ENCODE measurements at regions of chr7 and their contacts with region 1.

Region 1: DNA sequence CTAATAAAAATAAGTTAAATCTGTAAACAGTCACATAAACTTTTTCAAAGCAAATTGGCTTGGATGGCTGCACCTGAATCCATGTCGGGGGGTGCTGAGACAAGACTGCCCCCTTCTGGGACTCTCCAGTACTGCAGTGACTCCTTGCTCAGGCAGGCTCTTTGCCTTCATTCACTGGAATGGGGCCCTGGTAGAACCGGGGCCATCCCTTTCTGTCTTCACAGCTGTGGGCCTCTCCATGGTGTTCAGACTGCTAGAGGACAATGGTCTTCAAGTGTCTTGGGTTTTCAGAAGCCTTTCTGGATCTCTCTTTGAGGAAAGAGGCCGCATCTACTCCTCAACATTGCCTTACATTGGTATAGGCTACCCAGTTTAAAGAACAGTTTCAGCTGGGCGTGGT is 16.1 kb upstream of the IMPDH1 start:
- DNase-seq: peak; percentile 75
- H3K4me3 Mint-ChIP-seq: no peak overlapping the region
- H3K27ac Mint-ChIP-seq: no peak overlapping the region
- H3K4me1 Mint-ChIP-seq: peaks cover 11% of the 10 kb centered on the region
- H3K27me3 Mint-ChIP-seq: no peaks in the 10 kb centered on the region
- CTCF ChIP-seq: peak; percentile 95

Region 2: DNA sequence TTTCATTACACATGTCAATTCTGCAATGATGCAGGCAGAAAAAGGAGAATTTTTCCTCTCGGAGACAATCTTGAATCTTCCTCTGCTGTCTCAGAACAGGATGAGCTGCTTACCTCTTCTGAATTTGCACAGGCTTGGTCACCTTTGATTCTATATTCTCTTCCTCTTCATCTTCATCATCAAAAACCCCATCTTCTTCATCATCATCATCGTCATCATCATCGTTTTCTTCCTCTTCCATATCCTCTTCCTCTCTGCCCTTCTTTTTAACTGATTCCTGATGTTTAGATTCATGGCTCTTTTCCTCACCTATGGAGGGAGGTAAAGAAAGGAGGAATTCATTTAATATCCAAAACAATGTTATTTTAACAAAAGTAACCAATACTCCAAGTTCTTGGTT is 90.1 kb before region 1 on chr7:
- CTCF ChIA-PET with region 1: no interaction called
- POLR2A ChIA-PET with region 1: no interaction called
- intact Hi-C with region 1: no loop called
- DNase-seq: no peak
- H3K4me3 Mint-ChIP-seq: no peak overlapping the region
- H3K27ac Mint-ChIP-seq: no peak overlapping the region
- H3K4me1 Mint-ChIP-seq: no peaks in the 10 kb centered on the region
- H3K27me3 Mint-ChIP-seq: no peaks in the 10 kb centered on the region
- CTCF ChIP-seq: no peak

Region 3: DNA sequence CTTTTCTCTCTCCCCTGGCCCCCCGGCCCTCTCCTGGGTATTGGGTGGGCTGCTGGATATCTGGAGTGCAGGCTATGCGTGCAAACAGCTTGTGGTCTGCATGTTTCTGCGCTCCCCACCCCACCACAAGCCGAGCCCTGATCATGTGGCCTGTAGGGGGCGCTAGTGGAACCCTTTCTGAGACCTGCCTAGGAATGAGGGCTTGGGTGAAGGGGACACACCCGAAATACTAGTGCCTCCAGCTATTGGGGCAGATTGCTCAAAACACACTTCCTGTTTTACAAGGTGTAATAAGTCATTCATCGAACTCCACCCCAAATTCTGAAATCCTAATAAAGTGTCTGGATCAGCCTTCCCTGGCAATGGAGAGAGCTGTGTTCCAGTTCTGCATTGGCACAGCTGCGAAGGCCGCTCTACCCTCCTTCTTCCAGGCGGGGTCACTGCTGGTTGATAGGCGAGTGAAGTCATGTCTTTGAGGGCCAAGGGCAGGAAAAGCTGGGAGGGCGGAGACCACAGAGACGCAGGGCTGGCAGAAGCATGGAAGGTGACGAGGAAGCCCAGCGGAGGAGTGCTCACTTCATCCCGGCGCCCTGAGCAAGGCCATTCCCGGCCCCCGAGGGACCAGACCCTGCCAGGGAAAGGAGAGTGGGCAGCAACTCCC is 44.6 kb before region 1 on chr7:
- CTCF ChIA-PET with region 1: interaction called, 11 read pairs
- POLR2A ChIA-PET with region 1: no interaction called
- intact Hi-C with region 1: no loop called
- DNase-seq: peak; percentile 81
- H3K4me3 Mint-ChIP-seq: no peak overlapping the region
- H3K27ac Mint-ChIP-seq: no peak overlapping the region
- H3K4me1 Mint-ChIP-seq: peaks cover 11% of the 10 kb centered on the region
- H3K27me3 Mint-ChIP-seq: no peaks in the 10 kb centered on the region
- CTCF ChIP-seq: peak; percentile 75

Region 4: DNA sequence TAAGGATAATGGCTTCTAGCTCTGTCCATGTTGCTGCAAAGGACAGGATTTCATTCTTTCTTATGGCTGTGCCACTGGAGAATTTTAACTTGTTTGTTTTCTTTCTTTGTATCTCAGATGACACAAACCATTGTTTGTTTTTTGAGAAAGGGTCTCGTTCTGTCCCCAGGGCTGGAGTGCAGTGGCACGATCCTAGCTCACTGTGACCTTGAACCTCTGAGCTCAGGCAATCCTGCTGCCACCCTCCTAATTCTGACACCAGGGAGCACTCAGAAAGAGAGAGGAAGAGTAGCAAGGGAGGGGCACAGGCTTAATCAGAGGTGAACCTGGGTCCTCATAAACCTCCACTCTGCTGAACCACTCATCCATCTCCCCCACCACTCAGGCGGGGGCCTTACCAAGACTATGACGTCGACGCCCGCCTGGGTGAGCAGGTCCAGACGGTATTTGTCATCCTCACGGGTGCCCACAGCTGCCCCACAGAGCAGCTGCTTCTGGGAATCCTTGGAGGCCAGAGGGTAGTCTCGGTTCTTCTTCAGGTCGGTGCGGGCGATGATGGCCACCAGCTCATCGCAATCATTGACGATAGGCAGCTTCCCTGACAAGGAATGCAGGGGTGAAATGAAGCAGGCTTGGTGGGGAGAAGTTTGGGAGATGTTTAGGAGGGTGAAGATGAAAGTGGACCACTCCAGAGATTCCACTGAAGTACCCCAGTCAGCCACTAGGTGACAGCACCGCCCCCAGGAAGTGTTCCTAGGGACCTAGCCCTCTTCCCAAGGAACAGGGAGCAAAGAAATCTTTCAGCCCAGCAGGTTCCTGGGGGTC is 27.6 kb before region 1 on chr7:
- CTCF ChIA-PET with region 1: interaction called, 160 read pairs
- POLR2A ChIA-PET with region 1: interaction called, 4 read pairs
- intact Hi-C with region 1: loop called (anchors 1 kb)
- DNase-seq: peak; percentile 52
- H3K4me3 Mint-ChIP-seq: no peak overlapping the region
- H3K27ac Mint-ChIP-seq: no peak overlapping the region
- H3K4me1 Mint-ChIP-seq: peaks cover under 1% of the 10 kb centered on the region
- H3K27me3 Mint-ChIP-seq: no peaks in the 10 kb centered on the region
- CTCF ChIP-seq: peak; percentile 79

Region 5: DNA sequence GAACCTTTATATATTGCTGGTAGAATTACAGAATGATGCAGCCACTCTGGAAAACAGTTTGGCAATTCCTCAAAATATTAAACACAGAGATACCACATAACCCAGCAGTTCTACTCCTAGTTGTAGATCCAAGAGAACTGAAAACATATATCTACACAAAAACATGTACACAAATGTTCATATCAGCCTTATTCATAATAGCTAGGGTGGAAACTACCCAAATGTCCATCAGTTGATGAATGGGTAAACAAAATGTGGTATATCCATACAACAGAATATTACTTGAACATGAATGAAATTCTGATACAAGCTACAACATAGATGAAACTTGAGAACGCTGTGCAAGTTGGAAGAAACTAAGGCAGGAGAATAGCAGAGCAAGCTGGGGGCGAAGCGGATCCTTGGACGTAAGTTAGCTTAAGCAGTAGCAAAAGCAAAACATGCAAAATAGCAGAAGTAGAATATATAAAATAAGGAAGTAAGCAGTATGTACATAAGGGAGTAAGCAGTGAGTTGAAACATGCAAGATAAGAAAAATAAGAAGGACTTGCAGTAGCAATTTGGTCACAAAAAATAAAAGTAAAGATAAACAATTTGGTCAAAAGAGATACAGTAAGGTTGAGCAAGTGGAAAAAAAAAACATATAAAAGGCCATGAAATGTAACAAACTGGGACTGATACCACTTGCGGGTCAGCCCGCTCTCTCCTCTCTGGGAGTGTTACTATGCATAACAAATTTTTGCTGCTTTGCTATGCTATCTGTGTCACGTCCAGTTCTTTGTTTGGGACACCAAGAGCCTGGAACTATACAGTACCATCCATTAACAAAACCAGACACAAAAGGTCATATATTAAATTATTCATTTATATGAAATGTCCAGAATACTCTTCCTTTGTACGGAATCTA is 11.8 kb after region 1 on chr7:
- CTCF ChIA-PET with region 1: interaction called, 129 read pairs
- POLR2A ChIA-PET with region 1: interaction called, 3 read pairs
- intact Hi-C with region 1: no loop called
- DNase-seq: no peak
- H3K4me3 Mint-ChIP-seq: no peak overlapping the region
- H3K27ac Mint-ChIP-seq: no peak overlapping the region
- H3K4me1 Mint-ChIP-seq: no peaks in the 10 kb centered on the region
- H3K27me3 Mint-ChIP-seq: no peaks in the 10 kb centered on the region
- CTCF ChIP-seq: no peak

Region 6: DNA sequence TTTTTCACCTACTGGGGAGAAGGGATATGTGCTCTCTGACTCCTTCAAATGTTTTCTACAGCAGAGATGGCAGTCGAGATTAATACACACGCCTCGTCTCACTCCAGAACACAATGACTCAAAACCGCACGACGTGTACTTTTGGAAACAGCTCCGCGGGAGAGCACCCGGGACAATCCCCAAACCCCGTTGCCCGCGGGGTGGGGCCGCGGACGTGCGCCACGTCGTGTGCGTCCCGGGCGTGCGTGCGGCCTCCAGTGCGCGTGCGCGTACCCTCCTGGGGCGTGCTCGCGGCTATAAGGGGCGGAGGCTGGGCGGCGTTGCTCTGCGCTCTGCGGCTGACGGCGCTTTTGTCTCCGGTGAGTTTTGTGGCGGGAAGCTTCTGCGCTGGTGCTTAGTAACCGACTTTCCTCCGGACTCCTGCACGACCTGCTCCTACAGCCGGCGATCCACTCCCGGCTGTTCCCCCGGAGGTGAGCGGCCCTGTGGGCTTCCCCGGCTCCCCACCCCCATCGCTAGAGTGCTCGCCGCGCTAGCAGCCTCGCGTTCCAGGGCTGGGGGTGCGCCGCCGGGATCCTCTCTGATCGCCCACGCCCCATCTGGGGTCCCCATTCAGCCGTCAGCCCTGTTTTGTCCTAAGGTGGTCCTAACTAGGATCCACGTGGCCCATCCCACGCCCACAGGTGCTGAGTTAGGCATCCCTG is 29.9 kb after region 1 on chr7 and contains the start of gene HILPDA:
- CTCF ChIA-PET with region 1: interaction called, 269 read pairs
- POLR2A ChIA-PET with region 1: interaction called, 8 read pairs
- intact Hi-C with region 1: loop called (anchors 1 kb)
- DNase-seq: peak; percentile 94
- H3K4me3 Mint-ChIP-seq: peak within 1 kb of the TSS; percentile 95
- H3K27ac Mint-ChIP-seq: peak within 1 kb of the TSS; percentile 88
- H3K4me1 Mint-ChIP-seq: peaks cover 14% of the 10 kb centered on the region
- H3K27me3 Mint-ChIP-seq: peaks cover 25% of the 10 kb centered on the region
- CTCF ChIP-seq: no peak
- total RNA-seq, gene HILPDA: 6.2 and 8.3 TPM in 2 replicates

Region 7: GRCh38 chr7:128747327-128748079 is 321.7 kb after region 1 on chr7:
- CTCF ChIA-PET with region 1: no interaction called
- POLR2A ChIA-PET with region 1: no interaction called
- intact Hi-C with region 1: no loop called
- DNase-seq: no peak
- H3K4me3 Mint-ChIP-seq: no peak overlapping the region
- H3K27ac Mint-ChIP-seq: no peak overlapping the region
- H3K4me1 Mint-ChIP-seq: peaks cover 19% of the 10 kb centered on the region
- H3K27me3 Mint-ChIP-seq: no peaks in the 10 kb centered on the region
- CTCF ChIP-seq: no peak